Esophagus muscularis mucosa (tissue), 4 donors: ENCODE measurements at regions of chr11 and their contacts with region 1.

Region 1: GRCh38 chr11:102341844-102342318 is 5.1 kb upstream of the BIRC2 start:
- DNase-seq: no peak
- H3K4me3 ChIP-seq: no peak overlapping the region
- H3K27ac ChIP-seq: no peak overlapping the region
- H3K4me1 ChIP-seq: peaks cover 7 to 11% (median 9%) of the 10 kb centered on the region in 4 donors
- H3K27me3 ChIP-seq: no peaks in the 10 kb centered on the region
- CTCF ChIP-seq: peak; percentile 67 to 78 (median 71)
- EP300 ChIP-seq: no peak
- POLR2A ChIP-seq: no peak

Region 2: DNA sequence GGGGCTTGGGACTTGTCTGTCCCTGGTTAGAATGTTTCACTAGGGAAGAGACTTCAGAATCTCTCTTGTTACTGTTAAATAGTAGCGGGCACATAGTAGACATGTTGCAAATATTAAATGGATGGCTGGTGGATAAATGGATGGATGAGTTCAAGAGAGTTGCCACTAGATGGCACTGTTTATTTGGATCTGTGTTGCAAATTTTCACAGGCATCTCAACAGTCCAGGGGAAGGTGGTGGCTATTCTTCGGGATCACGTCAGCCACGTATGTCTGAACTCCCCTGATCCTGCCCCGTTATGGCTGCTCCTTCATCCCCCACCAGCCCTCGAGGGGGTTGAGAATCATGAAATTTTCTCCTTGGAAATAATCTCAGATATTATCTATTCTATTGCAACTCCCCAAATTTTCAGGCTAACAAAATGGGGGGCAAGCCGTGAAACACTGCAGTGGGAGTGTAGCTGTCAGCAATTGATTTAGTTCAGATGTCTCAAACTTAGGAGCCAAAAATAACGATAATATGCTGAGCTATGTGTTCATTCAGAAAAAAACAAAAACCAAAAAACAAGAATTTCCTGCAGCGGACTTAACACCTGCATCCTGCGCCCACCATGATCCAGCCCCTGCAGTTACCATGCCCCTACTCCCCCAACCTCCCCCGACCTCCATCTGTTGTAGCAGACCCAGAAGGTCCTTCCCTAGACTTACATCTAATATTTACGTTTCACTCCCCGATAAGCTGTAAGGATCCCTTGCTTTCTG is 53.7 kb before region 1 on chr11:
- intact Hi-C with region 1: loop called (anchors 5 kb)
- DNase-seq: no peak
- H3K4me3 ChIP-seq: peak overlapping the region; percentile 26 to 41 (median 32)
- H3K27ac ChIP-seq: no peak overlapping the region
- H3K4me1 ChIP-seq: peaks cover 0 to 23% (median 20%) of the 10 kb centered on the region in 4 donors
- H3K27me3 ChIP-seq: no peaks in the 10 kb centered on the region
- CTCF ChIP-seq: peak; percentile 71 to 83 (median 79)
- EP300 ChIP-seq: no peak
- POLR2A ChIP-seq: no peak

Region 3: DNA sequence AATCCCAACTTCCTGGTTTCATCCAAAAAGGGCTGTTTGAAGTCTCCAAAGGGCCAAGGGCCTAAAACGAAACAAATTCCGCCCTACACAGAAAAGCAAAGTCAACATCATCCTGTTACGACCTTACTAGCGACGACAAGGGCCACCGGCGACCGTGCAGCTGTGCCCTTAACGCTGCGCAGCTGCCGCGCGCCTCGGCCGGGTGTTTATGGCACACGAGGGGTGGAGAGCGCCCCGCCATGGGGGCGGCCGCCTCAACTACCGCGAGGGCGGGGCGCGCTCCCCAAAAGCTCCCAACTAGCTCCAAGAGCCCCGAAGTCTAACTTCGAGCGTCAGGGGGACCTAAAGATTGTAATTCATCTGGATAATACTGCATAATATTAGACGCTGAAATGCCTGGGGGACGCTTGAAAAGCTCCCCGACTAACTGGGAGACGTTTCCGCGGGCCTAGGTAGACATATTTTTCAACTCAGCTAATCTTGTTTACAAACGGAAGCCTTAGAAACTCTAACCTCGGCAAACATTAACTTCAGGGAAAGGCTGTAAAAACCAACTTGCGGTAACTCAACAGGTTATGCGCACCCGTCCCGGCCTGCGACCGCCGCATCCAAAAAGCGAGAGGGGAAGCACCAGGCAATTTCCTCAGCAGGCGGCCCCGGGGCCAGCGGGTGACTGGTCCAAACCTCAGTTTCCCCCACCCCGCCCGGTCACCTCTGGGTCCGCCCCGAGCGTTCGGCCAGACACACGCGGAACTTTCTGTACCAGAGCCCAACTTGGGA is 110.0 kb after region 1 on chr11:
- intact Hi-C with region 1: loop called (anchors 5 kb)
- DNase-seq: no peak
- H3K4me3 ChIP-seq: peak overlapping the region; percentile 76 to 97 (median 80)
- H3K27ac ChIP-seq: peak overlapping the region; percentile 82 to 90 (median 90)
- H3K4me1 ChIP-seq: peaks cover 18 to 42% (median 37%) of the 10 kb centered on the region in 4 donors
- H3K27me3 ChIP-seq: no peaks in the 10 kb centered on the region
- CTCF ChIP-seq: peak in 1 of 3 experiments; percentile 24
- EP300 ChIP-seq: no peak
- POLR2A ChIP-seq: no peak

Region 4: GRCh38 chr11:102495161-102496042 is 153.5 kb after region 1 on chr11:
- intact Hi-C with region 1: loop called (anchors 2 kb)
- DNase-seq: no peak
- H3K4me3 ChIP-seq: no peak overlapping the region
- H3K27ac ChIP-seq: no peak overlapping the region
- H3K4me1 ChIP-seq: peaks cover 0 to 15% (median 5%) of the 10 kb centered on the region in 4 donors
- H3K27me3 ChIP-seq: no peaks in the 10 kb centered on the region
- CTCF ChIP-seq: peak; percentile 68 to 72 (median 72)
- EP300 ChIP-seq: no peak
- POLR2A ChIP-seq: no peak

Region 5: DNA sequence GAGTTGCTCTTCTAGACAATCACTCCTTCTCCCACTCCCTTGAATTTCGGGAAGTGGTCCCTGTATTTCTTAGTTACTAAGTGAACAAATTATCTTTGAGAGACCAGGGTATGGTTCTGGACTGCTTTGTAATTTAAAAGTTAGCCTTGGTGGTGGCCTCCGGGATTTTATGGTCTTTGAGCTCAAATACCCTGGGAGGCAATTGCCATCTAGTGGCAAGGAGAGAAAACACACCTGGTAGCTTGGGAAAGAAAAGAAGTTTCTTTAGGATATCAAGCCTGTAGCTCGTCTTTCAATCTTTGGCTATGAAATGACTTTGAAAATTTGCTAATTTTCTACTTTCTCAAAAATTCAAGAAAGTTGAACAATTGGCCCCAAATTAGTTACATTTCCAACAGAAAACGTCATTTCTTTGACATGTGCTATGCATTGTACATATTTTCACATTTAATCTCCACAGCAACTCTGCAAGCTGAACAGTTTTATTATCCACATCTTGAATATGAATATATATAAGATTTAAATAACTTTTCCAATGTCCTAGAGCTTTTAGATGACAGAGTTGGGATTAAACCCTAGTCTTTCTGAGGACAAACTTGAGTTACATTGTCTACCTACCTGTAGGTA is 324.6 kb after region 1 on chr11:
- intact Hi-C with region 1: loop called (anchors 5 kb)
- DNase-seq: no peak
- H3K4me3 ChIP-seq: no peak overlapping the region
- H3K27ac ChIP-seq: no peak overlapping the region
- H3K4me1 ChIP-seq: no peaks in the 10 kb centered on the region
- H3K27me3 ChIP-seq: no peaks in the 10 kb centered on the region
- CTCF ChIP-seq: peak; percentile 63 to 81 (median 63)
- EP300 ChIP-seq: no peak
- POLR2A ChIP-seq: no peak